HepG2 (cell line): ENCODE measurements at regions of chr11 and their contacts with region 1.

Region 1: DNA sequence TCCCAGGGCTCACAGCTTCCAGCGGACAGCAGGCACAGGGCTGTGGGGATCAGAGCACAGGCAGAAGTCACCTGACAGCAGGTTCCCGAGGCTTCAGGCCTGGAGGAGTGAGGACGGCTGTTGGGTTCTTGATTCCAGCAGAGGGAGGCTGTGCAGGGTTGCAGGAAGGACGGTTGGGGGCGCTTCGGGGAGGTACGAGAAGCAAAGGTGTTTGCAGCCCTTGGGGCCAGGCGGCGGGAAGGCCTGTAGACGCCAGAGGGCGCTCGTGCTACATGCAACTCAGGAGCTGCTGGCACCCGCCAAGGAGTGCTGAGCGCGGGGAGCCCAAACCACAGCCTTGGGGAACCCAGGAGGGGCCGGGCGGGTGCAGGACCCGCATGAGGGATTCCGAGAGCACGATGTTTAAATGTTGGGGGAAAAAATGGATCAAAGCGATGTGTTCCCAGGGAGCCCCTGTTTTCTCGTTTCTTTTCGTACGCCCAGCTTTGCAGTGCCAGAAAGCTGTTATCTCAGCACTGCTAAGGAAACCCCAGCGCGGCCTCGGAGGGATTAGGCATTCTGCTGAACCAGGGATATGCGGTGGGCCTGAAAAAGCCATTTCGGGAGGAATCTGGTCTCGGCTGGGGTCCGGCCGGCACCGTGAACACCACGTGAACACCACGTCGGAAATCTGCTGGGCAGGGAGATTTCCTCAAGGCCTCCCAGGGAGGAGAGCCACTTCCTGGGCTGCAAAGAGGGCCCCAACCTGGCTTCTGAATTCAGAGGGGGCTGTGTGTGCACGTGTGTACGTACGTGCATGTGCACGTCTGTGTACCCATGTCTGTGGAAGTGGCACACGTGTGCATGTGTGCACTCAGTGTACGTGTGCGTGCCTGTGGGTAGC is 88.1 kb downstream of the KCNQ1 start:
- DNase-seq: peak; percentile 85
- ATAC-seq: peak; percentile 82
- H3K4me3 ChIP-seq: peak overlapping the region in 1 of 3 experiments; percentile 29; a peak in 1 of 6 replicates
- H3K27ac ChIP-seq: no peak overlapping the region
- H3K4me1 ChIP-seq: peaks cover 28% of the 10 kb centered on the region
- H3K27me3 ChIP-seq: peaks cover 8 to 66% of the 10 kb centered on the region in 2 experiments; a peak in 4 of 5 replicates
- CTCF ChIP-seq: peak; percentile 97
- EP300 ChIP-seq: no peak
- POLR2A ChIP-seq: no peak
- RAD21 ChIP-seq: peak; percentile 99

Region 2: GRCh38 chr11:2376751-2377451 is 156.0 kb before region 1 on chr11 and contains the start of gene CD81:
- CTCF ChIA-PET with region 1: no interaction called
- POLR2A ChIA-PET with region 1: no interaction called
- in situ Hi-C with region 1: no loop called
- intact Hi-C with region 1: no loop called
- DNase-seq: no peak
- ATAC-seq: no peak
- H3K4me3 ChIP-seq: no peak within 1 kb of the TSS
- H3K27ac ChIP-seq: no peak within 1 kb of the TSS
- H3K4me1 ChIP-seq: peaks cover 7% of the 10 kb centered on the region; the same call in 1 of the 2 replicates
- H3K27me3 ChIP-seq: peaks cover 9 to 73% of the 10 kb centered on the region in 2 experiments
- CTCF ChIP-seq: no peak
- EP300 ChIP-seq: no peak
- POLR2A ChIP-seq: no peak
- RAD21 ChIP-seq: no peak
- total RNA-seq, gene CD81: not detected in 2 replicates

Region 3: DNA sequence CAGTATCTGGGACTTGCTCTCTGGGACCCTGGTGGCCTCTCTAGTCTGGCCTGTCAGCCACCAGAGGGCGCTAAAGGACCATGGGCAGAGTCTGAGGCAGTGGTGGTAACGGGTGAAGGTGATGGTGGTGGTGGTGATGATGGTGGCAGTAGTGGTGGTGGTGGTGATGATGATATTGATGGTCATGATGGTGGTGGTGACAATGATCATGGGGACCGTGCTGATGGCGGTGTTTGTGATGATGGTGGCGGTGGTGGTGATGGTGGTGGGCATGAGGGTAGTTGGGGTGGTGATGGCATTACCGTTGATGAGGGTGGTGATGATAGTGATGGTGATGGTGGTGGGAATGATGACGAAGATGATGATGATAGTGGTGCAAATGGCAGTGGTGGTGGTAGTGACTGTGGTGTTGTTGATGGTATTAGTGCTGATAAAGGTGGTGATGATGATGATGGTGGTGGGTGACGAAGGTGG is 104.6 kb before region 1 on chr11:
- CTCF ChIA-PET with region 1: interaction called, 111 read pairs
- POLR2A ChIA-PET with region 1: no interaction called
- in situ Hi-C with region 1: loop called (anchors 5 kb)
- intact Hi-C with region 1: no loop called
- DNase-seq: peak; percentile 61
- ATAC-seq: peak; percentile 85
- H3K4me3 ChIP-seq: no peak overlapping the region
- H3K27ac ChIP-seq: no peak overlapping the region
- H3K4me1 ChIP-seq: no peaks in the 10 kb centered on the region
- H3K27me3 ChIP-seq: peaks cover 15 to 58% of the 10 kb centered on the region in 2 experiments
- CTCF ChIP-seq: peak; percentile 95
- EP300 ChIP-seq: no peak
- POLR2A ChIP-seq: no peak
- RAD21 ChIP-seq: peak; percentile 90

Region 4: DNA sequence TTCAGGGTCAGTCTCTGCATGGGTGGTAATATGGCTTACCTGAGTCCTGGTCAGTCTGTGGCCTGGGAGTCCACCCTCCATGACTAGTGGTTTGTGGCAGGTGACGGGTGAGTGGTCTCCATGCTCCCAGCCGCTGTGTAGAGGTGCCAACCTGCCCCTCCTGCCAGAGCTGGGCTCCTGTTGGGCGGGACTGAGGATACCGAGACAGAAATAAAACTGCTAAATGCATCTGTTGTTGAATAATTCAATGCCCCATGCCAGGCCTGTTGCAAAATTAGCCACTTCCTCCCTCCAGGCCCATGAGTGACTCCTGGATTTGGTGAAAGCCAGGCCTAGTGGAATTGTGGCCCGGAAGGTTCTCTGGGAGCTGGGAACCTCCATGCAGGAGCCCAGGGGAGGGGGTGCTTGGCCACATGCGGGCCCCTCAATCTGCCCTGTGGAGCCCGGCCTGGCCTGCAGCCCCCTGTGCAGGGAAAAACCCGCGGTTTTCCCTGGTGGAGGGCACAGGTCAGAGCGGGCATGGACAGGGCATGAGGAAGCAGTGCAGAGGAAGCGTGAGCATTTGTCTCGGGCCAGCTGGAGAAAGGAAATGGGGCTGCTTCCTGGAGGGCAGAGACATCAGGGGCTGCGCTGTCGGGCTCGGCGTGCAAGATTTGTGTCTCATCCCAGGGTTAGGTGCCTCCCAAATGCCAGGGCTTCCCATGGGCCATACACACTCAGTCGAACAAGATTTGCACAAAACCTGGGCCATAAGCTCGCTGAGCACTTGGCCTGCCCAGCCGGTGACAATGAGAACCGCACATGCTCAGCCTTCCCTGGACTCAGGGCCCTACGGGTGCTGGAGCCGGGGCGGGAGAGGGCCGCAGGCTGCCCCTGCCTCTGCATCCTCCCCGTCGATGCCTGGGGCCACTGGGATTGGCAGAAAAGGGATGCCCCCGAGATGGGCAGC is 21.2 kb before region 1 on chr11:
- CTCF ChIA-PET with region 1: no interaction called
- POLR2A ChIA-PET with region 1: no interaction called
- in situ Hi-C with region 1: no loop called
- intact Hi-C with region 1: no loop called
- DNase-seq: no peak
- ATAC-seq: no peak
- H3K4me3 ChIP-seq: no peak overlapping the region
- H3K27ac ChIP-seq: no peak overlapping the region
- H3K4me1 ChIP-seq: no peaks in the 10 kb centered on the region
- H3K27me3 ChIP-seq: peaks cover 12 to 69% of the 10 kb centered on the region in 2 experiments
- CTCF ChIP-seq: no peak
- EP300 ChIP-seq: no peak
- POLR2A ChIP-seq: no peak
- RAD21 ChIP-seq: no peak

Region 5: GRCh38 chr11:2653930-2654739 is 121.2 kb after region 1 on chr11:
- CTCF ChIA-PET with region 1: no interaction called
- POLR2A ChIA-PET with region 1: no interaction called
- in situ Hi-C with region 1: no loop called
- intact Hi-C with region 1: loop called (anchors 5 kb)
- DNase-seq: no peak
- ATAC-seq: peak; percentile 12; the same call in 2 of the 3 replicates
- H3K4me3 ChIP-seq: no peak overlapping the region
- H3K27ac ChIP-seq: no peak overlapping the region
- H3K4me1 ChIP-seq: 0 out of 2 replicates have a peak, but pooled peaks cover 5% of the 10 kb centered on the region
- H3K27me3 ChIP-seq: no peaks in the 10 kb centered on the region
- CTCF ChIP-seq: no peak
- EP300 ChIP-seq: no peak
- POLR2A ChIP-seq: peak in 1 of 2 experiments; percentile 48; a peak in 1 of 4 replicates
- RAD21 ChIP-seq: no peak

Region 6: GRCh38 chr11:2699531-2700414 is 166.8 kb after region 1 on chr11 and contains the start of gene KCNQ1OT1:
- CTCF ChIA-PET with region 1: interaction called, 3 read pairs
- POLR2A ChIA-PET with region 1: interaction called, 10 read pairs
- in situ Hi-C with region 1: no loop called
- intact Hi-C with region 1: no loop called
- DNase-seq: peak; percentile 95
- ATAC-seq: peak; percentile 90
- H3K4me3 ChIP-seq: peak within 1 kb of the TSS; percentile 95
- H3K27ac ChIP-seq: peak within 1 kb of the TSS; percentile 95
- H3K4me1 ChIP-seq: peaks cover 57% of the 10 kb centered on the region
- H3K27me3 ChIP-seq: peaks cover 0 to 3% of the 10 kb centered on the region in 2 experiments; a peak in 2 of 5 replicates
- CTCF ChIP-seq: peak; percentile 35; the same call in 1 of the 2 replicates
- EP300 ChIP-seq: peak in 1 of 2 experiments; percentile 4; a peak in 1 of 4 replicates
- POLR2A ChIP-seq: peak in 1 of 2 experiments; percentile 99; a peak in 2 of 4 replicates
- RAD21 ChIP-seq: peak; percentile 46; the same call in 1 of the 2 replicates
- total RNA-seq, gene KCNQ1OT1: 2.5 and 18.9 TPM in 2 replicates

Region 7: DNA sequence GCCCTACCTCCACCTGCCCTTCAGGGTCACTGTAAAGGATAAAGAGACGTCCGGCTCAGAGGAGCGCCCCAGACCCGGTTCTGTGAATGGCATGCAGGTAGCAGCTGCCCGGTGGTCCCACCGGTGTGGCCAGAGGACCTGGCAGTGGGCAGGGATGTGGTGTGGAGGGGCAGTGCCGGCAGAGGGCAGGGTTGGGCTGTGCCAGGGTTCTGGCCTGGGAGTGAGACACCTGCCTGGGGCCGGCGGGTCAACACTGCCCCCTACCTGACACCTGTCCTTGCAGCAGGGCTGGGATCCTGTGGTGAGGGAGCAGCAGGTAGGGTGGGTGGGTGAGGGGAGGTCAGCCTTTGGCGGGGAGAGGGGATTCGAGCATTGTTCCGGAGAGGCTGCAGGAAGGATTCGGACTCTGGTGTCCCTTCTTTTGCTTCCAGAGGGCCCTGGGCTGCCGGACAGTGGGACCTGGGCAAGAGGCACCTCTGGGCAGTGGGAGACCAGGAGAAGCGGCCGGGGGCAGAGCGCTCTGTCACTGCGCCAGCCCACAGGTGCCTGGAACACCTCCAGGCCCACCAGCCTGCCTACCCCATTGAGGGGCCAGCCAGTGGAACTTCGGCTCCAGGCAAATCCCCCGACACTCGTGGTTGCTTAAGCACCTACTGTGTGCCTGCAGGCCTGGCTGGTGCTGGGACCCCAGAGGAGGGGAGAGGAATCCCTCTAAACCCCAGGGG is 397.9 kb after region 1 on chr11:
- CTCF ChIA-PET with region 1: interaction called, 15 read pairs
- POLR2A ChIA-PET with region 1: no interaction called
- in situ Hi-C with region 1: no loop called
- intact Hi-C with region 1: loop called (anchors 1 kb)
- DNase-seq: peak; percentile 68
- ATAC-seq: peak; percentile 70
- H3K4me3 ChIP-seq: peak overlapping the region; percentile 49 to 70 (median 62); a peak in 5 of 6 replicates
- H3K27ac ChIP-seq: no peak overlapping the region
- H3K4me1 ChIP-seq: peaks cover 11% of the 10 kb centered on the region
- H3K27me3 ChIP-seq: peaks cover 7 to 32% of the 10 kb centered on the region in 2 experiments
- CTCF ChIP-seq: peak; percentile 94
- EP300 ChIP-seq: no peak
- POLR2A ChIP-seq: no peak
- RAD21 ChIP-seq: peak; percentile 88